ENCODE measurements at regions of chr18 and their contacts with region 1.

Region 1: DNA sequence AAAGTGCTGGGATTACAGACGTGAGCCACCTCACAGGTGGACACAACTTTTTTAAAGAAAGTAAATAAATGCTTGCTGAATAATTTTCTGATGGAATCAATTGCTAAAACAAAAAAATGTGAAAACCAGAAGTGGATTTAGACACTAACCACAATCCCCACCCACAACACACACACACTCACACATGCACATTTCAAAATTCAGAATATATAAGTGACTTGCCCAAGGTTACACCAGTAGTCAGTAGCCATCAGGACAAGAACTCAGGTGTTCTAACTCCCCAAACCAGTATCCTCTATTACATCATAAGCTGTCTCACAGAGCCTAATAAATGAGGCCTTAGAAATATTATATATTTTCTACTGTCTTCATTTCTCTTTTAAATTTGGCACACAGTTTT is 1923.6 kb upstream of the PIK3C3 start:
- DNase-seq: no peak
- ATAC-seq: no peak
- H3K4me3 ChIP-seq: no peak overlapping the region
- H3K27ac ChIP-seq: no peak overlapping the region
- H3K4me1 ChIP-seq: no peaks in the 10 kb centered on the region
- H3K27me3 ChIP-seq: no peaks in the 10 kb centered on the region

Region 2: DNA sequence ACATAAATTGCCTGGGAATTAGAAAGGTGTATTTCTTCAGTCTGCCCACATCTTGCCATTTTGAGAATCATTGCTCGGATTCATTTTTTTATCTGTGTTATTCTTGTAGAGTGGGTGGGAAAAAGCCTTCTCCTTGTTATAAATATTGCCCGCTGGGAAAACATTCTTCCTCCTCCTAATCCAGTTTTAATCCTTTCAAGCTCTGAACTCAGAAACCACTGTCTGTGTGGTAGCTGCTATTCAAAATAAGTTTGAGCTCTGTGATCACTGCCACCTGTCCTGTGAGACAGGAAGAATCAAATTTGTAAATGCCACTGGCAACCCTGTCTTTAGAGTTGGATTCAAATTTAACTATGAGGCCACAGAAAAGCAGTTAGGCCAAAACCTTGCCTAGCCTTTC is 48.4 kb after region 1 on chr18:
- intact Hi-C with region 1: loop called in 1 of 2 experiments (anchors 5 kb)
- DNase-seq: no peak
- ATAC-seq: no peak
- H3K4me3 ChIP-seq: no peak overlapping the region
- H3K27ac ChIP-seq: no peak overlapping the region
- H3K4me1 ChIP-seq: no peaks in the 10 kb centered on the region
- H3K27me3 ChIP-seq: no peaks in the 10 kb centered on the region

Measured in aorta (tissue), 5 donors.